CD4-positive, alpha-beta T cell (primary cell): ENCODE measurements at regions of chr9 and their contacts with region 1.

Region 1: DNA sequence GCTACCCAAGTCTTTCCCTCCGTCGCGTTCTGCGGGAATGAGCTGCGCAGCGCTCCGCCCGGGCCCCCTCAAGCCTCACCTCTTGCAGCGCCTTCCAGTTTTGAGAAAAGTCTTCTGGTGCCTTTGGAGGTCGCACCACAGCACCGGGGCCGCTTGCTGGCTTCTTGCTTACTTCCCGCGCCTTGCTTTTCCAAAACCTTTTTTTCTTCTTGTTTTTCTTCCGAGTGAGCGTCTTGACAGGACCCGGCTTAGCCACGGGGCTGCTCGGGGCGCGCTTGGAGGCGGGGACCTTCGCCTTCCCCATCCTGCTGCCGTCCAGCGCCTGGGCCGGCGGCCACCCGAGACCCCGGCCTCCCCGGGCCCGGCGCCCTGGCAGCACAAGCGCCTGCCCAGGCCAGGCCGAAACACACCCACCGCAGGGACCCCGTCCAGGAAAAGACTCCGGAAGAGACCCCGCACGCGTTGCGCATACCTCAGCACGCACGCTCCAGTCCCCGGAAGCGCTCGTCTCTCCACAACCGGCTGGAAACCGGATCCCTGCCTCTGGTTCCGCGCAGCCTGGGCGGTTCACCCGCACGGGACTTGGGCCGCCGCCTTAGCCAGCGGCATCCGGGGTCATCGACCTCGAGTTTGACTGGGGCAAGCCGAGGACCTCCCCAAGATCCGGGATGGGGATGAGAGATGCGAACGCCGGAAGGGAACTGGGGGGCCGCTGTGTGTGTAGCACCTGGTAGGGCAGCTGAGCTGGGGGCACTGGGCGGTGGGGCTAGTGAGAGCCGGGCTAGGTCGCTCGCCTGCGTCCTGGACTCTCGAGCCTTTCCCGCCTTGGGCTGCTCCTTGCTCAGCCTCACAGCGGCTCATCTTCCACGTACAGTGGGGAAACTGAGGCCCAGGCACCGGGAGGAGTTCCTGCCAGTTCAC is at the start of gene REXO4:
- DNase-seq: peak; percentile 71 to 91 (median 78)
- ATAC-seq: peak; percentile 86
- H3K4me3 ChIP-seq: peak within 1 kb of the TSS; percentile 79
- H3K4me3 Mint-ChIP-seq: peak within 1 kb of the TSS; percentile 92
- H3K27ac ChIP-seq: peak within 1 kb of the TSS; percentile 68 to 82
- H3K27ac Mint-ChIP-seq: peak within 1 kb of the TSS; percentile 86
- H3K4me1 ChIP-seq: peaks cover 34% of the 10 kb centered on the region
- H3K4me1 Mint-ChIP-seq: peaks cover 42% of the 10 kb centered on the region
- H3K27me3 ChIP-seq: no peaks in the 10 kb centered on the region
- H3K27me3 Mint-ChIP-seq: no peaks in the 10 kb centered on the region
- CTCF ChIP-seq: no peak
- total RNA-seq, gene REXO4: 17.3 to 18.5 TPM

Region 2: GRCh38 chr9:133347985-133348717 is 69.7 kb before region 1 on chr9 and contains the starts of genes MED22 and RPL7A:
- CTCF ChIA-PET with region 1: no interaction called
- POLR2A ChIA-PET with region 1: no interaction called
- intact Hi-C with region 1: loop called in 1 of 2 experiments (anchors 2 kb)
- DNase-seq: peak; percentile 83 to 97 (median 88)
- ATAC-seq: peak; percentile 90
- H3K4me3 ChIP-seq: peak within 1 kb of the TSS; percentile 88
- H3K4me3 Mint-ChIP-seq: peak within 1 kb of the TSS; percentile 96
- H3K27ac ChIP-seq: peak within 1 kb of the TSS; percentile 84 to 91
- H3K27ac Mint-ChIP-seq: peak within 1 kb of the TSS; percentile 85
- H3K4me1 ChIP-seq: peaks cover 50% of the 10 kb centered on the region
- H3K4me1 Mint-ChIP-seq: peaks cover 39% of the 10 kb centered on the region
- H3K27me3 ChIP-seq: no peaks in the 10 kb centered on the region
- H3K27me3 Mint-ChIP-seq: no peaks in the 10 kb centered on the region
- CTCF ChIP-seq: no peak
- total RNA-seq, gene MED22: 15.7 to 18.0 TPM
- total RNA-seq, gene RPL7A: 2,613 to 2,686 TPM

Region 3: GRCh38 chr9:133356391-133357091 is 61.3 kb before region 1 on chr9 and contains the starts of genes SURF1 and SURF2:
- CTCF ChIA-PET with region 1: no interaction called
- POLR2A ChIA-PET with region 1: no interaction called
- intact Hi-C with region 1: loop called in 1 of 2 experiments (anchors 5 kb)
- DNase-seq: peak; percentile 81 to 94 (median 90)
- ATAC-seq: peak; percentile 95
- H3K4me3 ChIP-seq: peak within 1 kb of the TSS; percentile 74
- H3K4me3 Mint-ChIP-seq: peak within 1 kb of the TSS; percentile 92
- H3K27ac ChIP-seq: peak within 1 kb of the TSS; percentile 56 to 79
- H3K27ac Mint-ChIP-seq: peak within 1 kb of the TSS; percentile 88
- H3K4me1 ChIP-seq: peaks cover 50% of the 10 kb centered on the region
- H3K4me1 Mint-ChIP-seq: peaks cover 27% of the 10 kb centered on the region
- H3K27me3 ChIP-seq: no peaks in the 10 kb centered on the region
- H3K27me3 Mint-ChIP-seq: no peaks in the 10 kb centered on the region
- CTCF ChIP-seq: no peak
- total RNA-seq, gene SURF1: 42.5 to 45.9 TPM
- total RNA-seq, gene SURF2: 12.7 TPM

Region 4: GRCh38 chr9:133459476-133460404 is 41.9 kb after region 1 on chr9 and contains the start of gene CACFD1:
- CTCF ChIA-PET with region 1: interaction called, 3 read pairs
- POLR2A ChIA-PET with region 1: interaction called, 10 read pairs
- intact Hi-C with region 1: loop called in 1 of 2 experiments (anchors 2 kb)
- DNase-seq: peak; percentile 83 to 97 (median 90)
- ATAC-seq: peak; percentile 80
- H3K4me3 ChIP-seq: peak within 1 kb of the TSS; percentile 69
- H3K4me3 Mint-ChIP-seq: peak within 1 kb of the TSS; percentile 95
- H3K27ac ChIP-seq: peak within 1 kb of the TSS; percentile 52 to 82
- H3K27ac Mint-ChIP-seq: peak within 1 kb of the TSS; percentile 97
- H3K4me1 ChIP-seq: peaks cover 18% of the 10 kb centered on the region
- H3K4me1 Mint-ChIP-seq: peaks cover 23% of the 10 kb centered on the region
- H3K27me3 ChIP-seq: no peaks in the 10 kb centered on the region
- H3K27me3 Mint-ChIP-seq: no peaks in the 10 kb centered on the region
- CTCF ChIP-seq: no peak
- total RNA-seq, gene CACFD1: 3.7 to 3.8 TPM